ENCODE measurements at regions of chr7 and their contacts with region 1.

Region 1: GRCh38 chr7:150753826-150754603 is 16.8 kb downstream of the GIMAP5 start:
- DNase-seq: no peak
- ATAC-seq: no peak

Region 2: GRCh38 chr7:150448789-150449147 is 305.2 kb before region 1 on chr7:
- intact Hi-C with region 1: loop called (anchors 5 kb)
- DNase-seq: peak; percentile 82
- ATAC-seq: peak; percentile 60

Region 3: GRCh38 chr7:150778738-150779301 is 24.8 kb after region 1 on chr7:
- intact Hi-C with region 1: no loop called
- DNase-seq: peak; percentile 91
- ATAC-seq: peak; percentile 84

Measured in sciatic nerve (tissue), 2 donors.